A549 (cell line): ENCODE measurements at regions of chr11 and their contacts with region 1.

Region 1: DNA sequence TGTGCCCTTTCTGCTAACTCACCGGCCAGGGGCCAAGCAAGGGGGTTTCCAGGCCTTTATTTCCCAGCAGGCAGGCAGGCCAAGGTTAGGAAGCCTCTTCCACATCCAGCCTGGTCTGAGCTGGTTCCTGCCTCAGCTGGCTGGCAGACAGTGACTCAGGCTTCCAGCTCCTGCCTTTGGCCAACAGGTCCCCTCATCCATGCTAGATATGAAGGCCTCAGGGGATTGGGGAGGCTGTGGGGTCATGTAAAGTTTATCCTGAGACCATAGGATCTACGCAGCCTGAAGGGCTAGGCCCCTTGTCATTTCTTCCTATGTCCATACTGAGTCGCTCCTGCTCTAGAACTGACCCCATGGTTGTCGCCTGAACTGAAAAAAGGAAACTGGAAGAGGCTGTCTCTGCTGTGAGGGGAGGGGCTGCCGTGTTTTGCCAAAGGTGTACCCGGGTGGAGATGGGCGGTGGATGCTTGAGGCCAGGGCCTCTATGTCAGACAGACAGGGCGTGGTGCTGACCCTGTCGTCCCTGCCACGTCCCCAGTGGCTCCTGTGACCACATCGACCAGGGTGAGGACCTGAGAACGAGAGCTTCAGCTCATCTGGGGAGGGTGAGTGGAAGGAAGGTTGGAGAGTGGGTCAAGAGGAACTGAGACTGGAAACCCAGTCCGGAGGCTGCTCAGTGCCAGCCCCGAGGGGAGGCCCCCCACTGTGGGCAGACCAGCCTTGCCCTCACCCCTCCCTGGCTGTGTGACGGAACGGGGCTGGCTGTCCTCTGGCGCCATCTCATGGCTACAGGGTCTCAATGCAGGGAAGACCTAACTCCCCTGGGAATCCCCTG is 17.0 kb downstream of the P2RY6 start:
- DNase-seq: peak; percentile 86 to 91
- ATAC-seq: peak; percentile 72 to 84
- H3K4me3 ChIP-seq: peak overlapping the region; percentile 20; the same call in 1 of the 3 replicates
- H3K27ac ChIP-seq: peak overlapping the region; percentile 80 to 90
- H3K4me1 ChIP-seq: peaks cover 36% of the 10 kb centered on the region
- CTCF ChIP-seq: peak; percentile 96
- EP300 ChIP-seq: no peak
- POLR2A ChIP-seq: no peak
- RAD21 ChIP-seq: peak; percentile 98

Region 2: GRCh38 chr11:72831513-72832300 is 457.4 kb before region 1 on chr11:
- CTCF ChIA-PET with region 1: interaction called, 40 read pairs
- POLR2A ChIA-PET with region 1: no interaction called
- DNase-seq: peak; percentile 74 to 77
- ATAC-seq: peak; percentile 93 to 96
- H3K4me3 ChIP-seq: no peak overlapping the region
- H3K27ac ChIP-seq: peak overlapping the region; percentile 32 to 75; a peak in 4 of 6 replicates
- H3K4me1 ChIP-seq: peaks cover 4% of the 10 kb centered on the region; the same call in 2 of the 3 replicates
- CTCF ChIP-seq: peak; percentile 90
- EP300 ChIP-seq: no peak
- POLR2A ChIP-seq: no peak
- RAD21 ChIP-seq: peak; percentile 95 to 97

Region 3: GRCh38 chr11:73218106-73218829 is 70.8 kb before region 1 on chr11 and contains the start of gene P2RY2:
- CTCF ChIA-PET with region 1: interaction called, 11 read pairs
- POLR2A ChIA-PET with region 1: no interaction called
- DNase-seq: peak; percentile 72 to 82
- ATAC-seq: peak; percentile 90 to 94
- H3K4me3 ChIP-seq: peak within 1 kb of the TSS; percentile 43
- H3K27ac ChIP-seq: peak within 1 kb of the TSS; percentile 68 to 91
- H3K4me1 ChIP-seq: peaks cover 16% of the 10 kb centered on the region
- CTCF ChIP-seq: peak; percentile 74
- EP300 ChIP-seq: no peak
- POLR2A ChIP-seq: peak; percentile 79
- RAD21 ChIP-seq: peak in 1 of 2 experiments; percentile 31; a peak in 3 of 5 replicates
- polyA plus RNA-seq, gene P2RY2: 3.7 and 5.2 TPM in 2 replicates

Region 4: GRCh38 chr11:73242251-73243079 is 46.6 kb before region 1 on chr11:
- CTCF ChIA-PET with region 1: interaction called, 122 read pairs
- POLR2A ChIA-PET with region 1: interaction called, 3 read pairs
- DNase-seq: peak; percentile 76 to 90
- ATAC-seq: peak; percentile 86 to 93
- H3K4me3 ChIP-seq: no peak overlapping the region
- H3K27ac ChIP-seq: peak overlapping the region; percentile 69 to 92
- H3K4me1 ChIP-seq: peaks cover 22% of the 10 kb centered on the region; the same call in 2 of the 3 replicates
- CTCF ChIP-seq: peak; percentile 94
- EP300 ChIP-seq: no peak
- POLR2A ChIP-seq: no peak
- RAD21 ChIP-seq: peak; percentile 92 to 93

Region 5: GRCh38 chr11:73271936-73272719 is 17.0 kb before region 1 on chr11 and contains the start of gene P2RY6:
- CTCF ChIA-PET with region 1: interaction called, 224 read pairs
- POLR2A ChIA-PET with region 1: no interaction called
- DNase-seq: peak; percentile 93 to 97
- ATAC-seq: peak; percentile 80 to 91
- H3K4me3 ChIP-seq: peak within 1 kb of the TSS; percentile 47
- H3K27ac ChIP-seq: peak within 1 kb of the TSS; percentile 88 to 91
- H3K4me1 ChIP-seq: peaks cover 47% of the 10 kb centered on the region
- CTCF ChIP-seq: no peak
- EP300 ChIP-seq: no peak
- POLR2A ChIP-seq: peak; percentile 30; the same call in 1 of the 2 replicates
- RAD21 ChIP-seq: no peak; a peak in 1 of 5 replicates
- polyA plus RNA-seq, gene P2RY6: 6.8 and 8.4 TPM in 2 replicates